Breast epithelium (tissue), 4 donors: ENCODE measurements at regions of chr18 and their contacts with region 1.

Region 1: GRCh38 chr18:1446765-1447164 is 542.1 kb downstream of the ADCYAP1 start:
- DNase-seq: no peak
- H3K4me3 ChIP-seq: no peak overlapping the region
- H3K27ac ChIP-seq: no peak overlapping the region
- H3K4me1 ChIP-seq: no peaks in the 10 kb centered on the region
- H3K27me3 ChIP-seq: no peaks in the 10 kb centered on the region
- CTCF ChIP-seq: no peak
- POLR2A ChIP-seq: no peak

Region 2: GRCh38 chr18:1392046-1392445 is 54.7 kb before region 1 on chr18:
- intact Hi-C with region 1: loop called (anchors 5 kb)
- DNase-seq: no peak
- H3K4me3 ChIP-seq: no peak overlapping the region
- H3K27ac ChIP-seq: no peak overlapping the region
- H3K4me1 ChIP-seq: no peaks in the 10 kb centered on the region
- H3K27me3 ChIP-seq: no peaks in the 10 kb centered on the region
- CTCF ChIP-seq: no peak
- POLR2A ChIP-seq: no peak

Region 3: GRCh38 chr18:2002151-2002550 is 555.4 kb after region 1 on chr18:
- intact Hi-C with region 1: no loop called
- DNase-seq: no peak
- H3K4me3 ChIP-seq: no peak overlapping the region
- H3K27ac ChIP-seq: no peak overlapping the region
- H3K4me1 ChIP-seq: no peaks in the 10 kb centered on the region
- H3K27me3 ChIP-seq: no peaks in the 10 kb centered on the region
- CTCF ChIP-seq: no peak
- POLR2A ChIP-seq: no peak